Activated CD4-positive, alpha-beta memory T cell treated with anti-CD3 and anti-CD28 coated beads for 36 hours (primary cell): ENCODE measurements at regions of chr9 and their contacts with region 1.

Region 1: DNA sequence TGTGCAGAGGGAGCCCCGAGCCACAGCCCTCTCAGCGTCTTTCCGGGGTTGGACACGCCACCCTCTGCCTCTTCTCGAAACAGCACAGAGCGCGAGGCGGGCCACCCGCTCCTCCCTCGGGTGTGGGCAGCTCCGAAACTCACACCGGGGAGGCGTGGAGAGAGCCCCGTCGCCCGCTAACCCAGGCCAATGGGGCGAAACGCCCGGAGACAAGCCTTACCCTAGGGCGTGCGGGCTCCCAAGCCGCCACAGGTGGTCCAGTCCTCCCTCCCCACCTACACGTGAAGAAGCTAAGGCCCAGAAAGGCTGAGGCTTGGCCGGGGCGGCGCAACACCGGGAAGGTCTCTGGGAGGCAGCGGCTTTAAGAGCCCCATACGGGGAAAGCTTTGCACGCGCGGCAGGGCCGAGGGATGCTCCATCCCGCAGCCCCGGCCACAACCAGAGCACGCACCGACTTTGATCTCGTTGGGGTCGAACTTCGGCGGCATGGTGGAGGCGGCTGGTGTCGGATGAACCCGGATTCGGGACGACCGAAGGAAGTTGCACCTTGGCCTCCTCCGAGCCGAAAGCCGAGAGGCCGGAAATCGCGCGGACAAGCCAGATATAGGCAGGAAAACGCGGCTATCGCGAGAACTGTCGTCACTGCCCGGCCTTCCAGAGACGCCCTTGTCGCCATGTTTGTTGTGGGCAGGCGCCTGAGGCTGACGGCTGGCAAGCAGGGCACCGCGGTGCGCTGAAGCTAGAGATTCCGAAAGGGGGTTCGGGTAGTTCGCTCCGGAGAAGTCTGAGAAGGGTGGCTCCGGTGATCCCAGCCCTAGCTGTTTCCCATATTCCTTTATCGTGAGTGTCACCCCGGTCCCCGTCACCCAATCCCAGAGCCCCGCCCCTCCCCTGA is at the starts of genes LRSAM1 and RPL12:
- DNase-seq: peak; percentile 97
- H3K4me3 Mint-ChIP-seq: peak within 1 kb of the TSS; percentile 94
- H3K27ac Mint-ChIP-seq: peak within 1 kb of the TSS; percentile 94
- H3K4me1 Mint-ChIP-seq: peaks cover 37% of the 10 kb centered on the region
- H3K27me3 Mint-ChIP-seq: no peaks in the 10 kb centered on the region
- total RNA-seq, gene LRSAM1: 19.7 to 20.9 TPM
- total RNA-seq, gene RPL12: 2,267 to 2,331 TPM

Region 2: DNA sequence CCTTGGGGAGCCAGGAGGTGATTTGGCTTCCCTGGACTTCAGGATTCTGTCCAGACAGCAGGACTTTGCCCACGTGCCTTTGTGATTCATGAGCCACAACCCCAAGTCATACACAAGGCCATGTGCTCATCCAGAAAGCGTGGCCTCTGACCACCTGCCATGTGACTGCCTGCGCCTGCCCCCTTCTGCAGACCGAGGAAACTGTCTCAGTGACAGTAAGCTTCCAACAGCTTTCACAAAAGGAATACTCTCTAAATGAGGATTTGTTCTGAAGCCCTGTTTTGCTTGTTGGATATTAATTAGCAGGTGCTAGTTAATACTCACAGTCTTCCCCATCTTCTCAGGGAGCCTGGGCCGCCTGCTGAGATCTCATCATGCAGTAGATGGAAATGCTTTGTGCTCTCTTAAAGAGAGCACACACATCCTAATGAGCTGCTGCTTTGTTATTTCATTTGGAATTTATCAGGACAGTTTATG is 291.7 kb before region 1 on chr9:
- CTCF ChIA-PET with region 1: no interaction called
- POLR2A ChIA-PET with region 1: no interaction called
- intact Hi-C with region 1: no loop called
- DNase-seq: peak; percentile 12
- H3K4me3 Mint-ChIP-seq: no peak overlapping the region
- H3K27ac Mint-ChIP-seq: no peak overlapping the region
- H3K4me1 Mint-ChIP-seq: peaks cover 36% of the 10 kb centered on the region
- H3K27me3 Mint-ChIP-seq: peaks cover 1% of the 10 kb centered on the region

Region 3: GRCh38 chr9:127224178-127224882 is 226.7 kb before region 1 on chr9:
- CTCF ChIA-PET with region 1: interaction called, 5 read pairs
- POLR2A ChIA-PET with region 1: interaction called, 4 read pairs
- intact Hi-C with region 1: loop called (anchors 2 kb)
- DNase-seq: peak; percentile 91
- H3K4me3 Mint-ChIP-seq: peak overlapping the region; percentile 78
- H3K27ac Mint-ChIP-seq: peak overlapping the region; percentile 79
- H3K4me1 Mint-ChIP-seq: peaks cover 32% of the 10 kb centered on the region
- H3K27me3 Mint-ChIP-seq: peaks cover 10% of the 10 kb centered on the region

Region 4: GRCh38 chr9:127388037-127388855 is 62.8 kb before region 1 on chr9:
- CTCF ChIA-PET with region 1: no interaction called
- POLR2A ChIA-PET with region 1: interaction called, 12 read pairs
- intact Hi-C with region 1: loop called (anchors 2 kb)
- DNase-seq: peak; percentile 94
- H3K4me3 Mint-ChIP-seq: peak overlapping the region; percentile 38
- H3K27ac Mint-ChIP-seq: peak overlapping the region; percentile 70
- H3K4me1 Mint-ChIP-seq: peaks cover 30% of the 10 kb centered on the region
- H3K27me3 Mint-ChIP-seq: peaks cover 62% of the 10 kb centered on the region

Region 5: GRCh38 chr9:127423934-127424675 is 27.0 kb before region 1 on chr9 and contains the start of gene ZNF79:
- CTCF ChIA-PET with region 1: interaction called, 6 read pairs
- POLR2A ChIA-PET with region 1: interaction called, 27 read pairs
- intact Hi-C with region 1: loop called (anchors 1 kb)
- DNase-seq: peak; percentile 96
- H3K4me3 Mint-ChIP-seq: peak within 1 kb of the TSS; percentile 98
- H3K27ac Mint-ChIP-seq: peak within 1 kb of the TSS; percentile 93
- H3K4me1 Mint-ChIP-seq: peaks cover 43% of the 10 kb centered on the region
- H3K27me3 Mint-ChIP-seq: no peaks in the 10 kb centered on the region
- total RNA-seq, gene ZNF79: 9.3 to 9.7 TPM

Region 6: GRCh38 chr9:127708952-127709587 is 258.0 kb after region 1 on chr9:
- CTCF ChIA-PET with region 1: no interaction called
- POLR2A ChIA-PET with region 1: no interaction called
- intact Hi-C with region 1: no loop called
- DNase-seq: no peak
- H3K4me3 Mint-ChIP-seq: no peak overlapping the region
- H3K27ac Mint-ChIP-seq: no peak overlapping the region
- H3K4me1 Mint-ChIP-seq: peaks cover 22% of the 10 kb centered on the region
- H3K27me3 Mint-ChIP-seq: no peaks in the 10 kb centered on the region

Region 7: DNA sequence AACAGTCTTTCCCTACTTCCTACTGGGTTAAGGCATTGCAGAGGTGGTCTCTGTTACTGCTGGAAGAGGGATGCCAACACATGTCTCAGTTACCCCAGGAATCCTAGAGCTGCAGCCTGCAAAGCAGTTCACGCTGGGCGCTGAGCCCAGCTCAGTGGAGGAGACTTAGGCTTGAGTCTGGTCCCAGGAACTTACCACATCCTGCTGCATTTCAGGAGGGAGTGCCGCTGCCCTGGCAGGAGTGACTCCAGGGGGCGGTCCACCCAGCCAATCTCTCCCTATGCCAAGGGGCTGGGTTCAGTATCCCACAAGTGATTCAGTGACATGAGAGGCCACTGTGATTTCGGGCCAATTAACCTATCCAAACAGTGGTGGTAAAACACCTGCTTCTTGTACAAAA is 272.4 kb after region 1 on chr9:
- CTCF ChIA-PET with region 1: no interaction called
- POLR2A ChIA-PET with region 1: no interaction called
- intact Hi-C with region 1: no loop called
- DNase-seq: no peak
- H3K4me3 Mint-ChIP-seq: no peak overlapping the region
- H3K27ac Mint-ChIP-seq: no peak overlapping the region
- H3K4me1 Mint-ChIP-seq: peaks cover 15% of the 10 kb centered on the region
- H3K27me3 Mint-ChIP-seq: no peaks in the 10 kb centered on the region